ENCODE measurements at regions of chr1 and their contacts with region 1.

Region 1: DNA sequence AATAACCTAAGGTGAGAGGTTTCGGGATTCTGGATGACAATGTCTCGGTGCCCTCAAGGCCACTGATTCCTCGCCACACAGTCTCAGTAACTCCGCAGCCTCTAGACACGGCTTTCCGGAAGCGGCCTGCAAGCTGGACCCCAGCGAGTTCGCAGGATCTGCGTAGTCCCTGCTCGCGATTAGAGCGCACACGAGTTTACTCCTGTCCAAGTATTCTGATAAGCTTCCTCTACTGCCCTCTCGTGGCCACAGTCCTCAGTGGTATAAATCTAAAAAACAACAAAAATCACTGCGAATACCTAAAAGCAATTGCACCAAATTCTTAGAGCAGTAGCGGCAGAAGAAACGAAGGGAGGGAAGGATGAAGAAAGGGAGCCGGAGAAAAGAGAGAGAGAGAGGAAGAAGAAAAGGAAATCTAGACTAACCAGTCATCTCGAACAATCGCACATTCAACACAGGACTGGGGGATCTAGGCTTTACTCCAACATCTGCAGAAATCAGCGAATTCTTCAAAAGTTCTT is 1.1 kb upstream of the PLXNA2 start:
- DNase-seq: peak; percentile 52 to 86 (median 70)
- ATAC-seq: peak; percentile 66
- H3K4me3 ChIP-seq: peak overlapping the region; percentile 77
- H3K4me3 Mint-ChIP-seq: peak overlapping the region; percentile 91
- H3K27ac ChIP-seq: peak overlapping the region in 1 of 2 donors; percentile 23
- H3K27ac Mint-ChIP-seq: peak overlapping the region; percentile 12
- H3K4me1 ChIP-seq: peaks cover 15% of the 10 kb centered on the region
- H3K4me1 Mint-ChIP-seq: peaks cover 10% of the 10 kb centered on the region
- H3K27me3 ChIP-seq: peaks cover 17 to 27% of the 10 kb centered on the region in 2 experiments
- H3K27me3 Mint-ChIP-seq: peaks cover 22% of the 10 kb centered on the region
- CTCF ChIP-seq: peak; percentile 82

Region 2: DNA sequence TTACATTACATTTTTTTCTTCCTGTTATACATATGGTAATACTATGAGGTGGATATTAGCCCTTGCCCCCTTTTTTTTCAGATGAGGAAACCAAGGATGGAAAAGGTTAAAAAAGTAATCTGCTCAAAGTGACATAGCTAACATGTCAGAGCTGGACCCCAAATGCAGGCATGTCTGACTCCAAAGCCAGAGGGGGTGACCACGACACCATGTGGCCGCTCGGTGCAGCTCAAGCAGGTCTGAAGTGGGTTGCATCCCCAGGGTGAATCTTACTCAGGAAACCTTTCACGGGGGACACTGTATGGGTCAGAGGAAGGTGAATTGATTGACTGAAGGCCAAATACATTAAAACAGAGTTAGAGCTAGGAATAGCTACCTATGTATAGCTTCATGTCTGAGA is 369.1 kb before region 1 on chr1:
- CTCF ChIA-PET with region 1: no interaction called
- POLR2A ChIA-PET with region 1: no interaction called
- intact Hi-C with region 1: loop called in 1 of 2 experiments (anchors 10 kb)
- DNase-seq: no peak
- ATAC-seq: no peak
- H3K4me3 ChIP-seq: no peak overlapping the region
- H3K4me3 Mint-ChIP-seq: no peak overlapping the region
- H3K27ac ChIP-seq: no peak overlapping the region
- H3K27ac Mint-ChIP-seq: peak overlapping the region; percentile 36
- H3K4me1 ChIP-seq: peaks cover 43% of the 10 kb centered on the region
- H3K4me1 Mint-ChIP-seq: peaks cover 58% of the 10 kb centered on the region
- H3K27me3 ChIP-seq: no peaks in the 10 kb centered on the region
- H3K27me3 Mint-ChIP-seq: no peaks in the 10 kb centered on the region
- CTCF ChIP-seq: no peak

Region 3: GRCh38 chr1:208132287-208132883 is 112.9 kb before region 1 on chr1:
- CTCF ChIA-PET with region 1: no interaction called
- POLR2A ChIA-PET with region 1: interaction called, 7 read pairs
- intact Hi-C with region 1: loop called (anchors 2 to 5 kb)
- DNase-seq: peak; percentile 14 to 62 (median 29)
- ATAC-seq: no peak
- H3K4me3 ChIP-seq: no peak overlapping the region
- H3K4me3 Mint-ChIP-seq: no peak overlapping the region
- H3K27ac ChIP-seq: no peak overlapping the region
- H3K27ac Mint-ChIP-seq: no peak overlapping the region
- H3K4me1 ChIP-seq: peaks cover 7% of the 10 kb centered on the region
- H3K4me1 Mint-ChIP-seq: no peaks in the 10 kb centered on the region
- H3K27me3 ChIP-seq: peaks cover 5 to 11% of the 10 kb centered on the region in 2 experiments
- H3K27me3 Mint-ChIP-seq: peaks cover 34% of the 10 kb centered on the region
- CTCF ChIP-seq: peak; percentile 64

Region 4: DNA sequence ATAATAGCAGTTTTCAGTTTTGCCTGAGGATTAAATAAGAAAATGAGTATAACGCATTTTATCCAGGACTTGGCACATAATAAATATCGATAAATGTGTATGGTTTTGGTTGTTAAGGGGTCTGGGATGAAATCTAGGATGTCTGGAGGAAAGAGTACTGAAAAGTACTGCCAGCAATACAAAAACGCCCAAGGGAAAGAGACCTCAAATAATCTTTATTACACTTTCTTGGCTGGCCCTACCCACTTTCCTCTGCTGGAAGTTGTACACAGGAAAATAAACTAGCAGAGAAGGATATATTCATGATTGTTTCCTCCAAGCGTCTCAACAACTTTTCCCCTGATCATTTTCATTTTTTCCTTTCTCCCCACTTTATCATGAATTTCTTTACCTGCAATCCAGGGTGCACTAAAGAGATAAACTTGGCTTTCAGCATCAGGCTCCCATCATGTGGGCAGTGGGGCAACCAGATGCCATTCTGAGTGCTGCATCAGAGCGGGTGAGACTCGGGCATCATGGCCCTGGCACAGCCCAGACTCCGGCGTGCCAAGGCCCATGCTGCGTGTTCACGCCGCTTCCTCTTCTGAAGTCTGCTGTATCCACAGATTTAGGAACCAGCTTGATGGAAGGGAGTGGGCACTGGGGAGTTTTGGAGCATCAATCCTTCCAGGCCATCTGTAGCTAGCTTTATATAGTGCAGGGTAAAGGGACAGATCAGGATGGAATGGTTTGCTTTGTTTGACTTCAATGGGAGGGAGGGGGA is 34.8 kb after region 1 on chr1:
- CTCF ChIA-PET with region 1: no interaction called
- POLR2A ChIA-PET with region 1: no interaction called
- intact Hi-C with region 1: no loop called
- DNase-seq: no peak
- ATAC-seq: no peak
- H3K4me3 ChIP-seq: no peak overlapping the region
- H3K4me3 Mint-ChIP-seq: no peak overlapping the region
- H3K27ac ChIP-seq: no peak overlapping the region
- H3K27ac Mint-ChIP-seq: no peak overlapping the region
- H3K4me1 ChIP-seq: no peaks in the 10 kb centered on the region
- H3K4me1 Mint-ChIP-seq: no peaks in the 10 kb centered on the region
- H3K27me3 ChIP-seq: peaks cover 5 to 10% of the 10 kb centered on the region in 2 experiments
- H3K27me3 Mint-ChIP-seq: peaks cover 36% of the 10 kb centered on the region
- CTCF ChIP-seq: no peak

Measured in CD4-positive, alpha-beta T cell (primary cell).